ENCODE measurements at regions of chr1 and their contacts with region 1.

Region 1: GRCh38 chr1:185439727-185440415 is 122.8 kb upstream of the IVNS1ABP start:
- DNase-seq: peak; percentile 44
- H3K4me3 Mint-ChIP-seq: no peak overlapping the region
- H3K27ac Mint-ChIP-seq: no peak overlapping the region
- H3K4me1 Mint-ChIP-seq: peaks cover 27% of the 10 kb centered on the region
- H3K27me3 Mint-ChIP-seq: no peaks in the 10 kb centered on the region

Region 2: DNA sequence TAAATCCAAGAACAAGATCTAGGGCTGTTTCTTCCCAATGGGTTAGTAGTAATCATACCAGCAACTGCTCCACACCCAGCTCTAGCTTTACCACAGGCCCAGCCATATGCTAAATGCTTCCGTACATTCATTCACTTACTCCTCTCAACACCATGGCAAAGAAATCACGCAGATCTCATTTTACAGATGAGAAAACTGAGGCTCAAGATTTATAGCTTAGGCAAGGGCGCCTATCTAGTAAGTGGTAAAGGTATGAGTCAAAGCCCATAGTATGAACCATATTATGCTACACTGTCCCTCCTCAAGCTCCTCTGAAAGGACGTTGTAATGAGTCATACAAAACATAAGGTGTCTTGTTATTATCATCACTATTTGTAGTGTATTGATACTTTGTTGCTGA is 547.8 kb before region 1 on chr1:
- intact Hi-C with region 1: loop called (anchors 1 kb)
- DNase-seq: no peak
- H3K4me3 Mint-ChIP-seq: no peak overlapping the region
- H3K27ac Mint-ChIP-seq: peak overlapping the region; percentile 61
- H3K4me1 Mint-ChIP-seq: peaks cover 39% of the 10 kb centered on the region
- H3K27me3 Mint-ChIP-seq: no peaks in the 10 kb centered on the region

Region 3: DNA sequence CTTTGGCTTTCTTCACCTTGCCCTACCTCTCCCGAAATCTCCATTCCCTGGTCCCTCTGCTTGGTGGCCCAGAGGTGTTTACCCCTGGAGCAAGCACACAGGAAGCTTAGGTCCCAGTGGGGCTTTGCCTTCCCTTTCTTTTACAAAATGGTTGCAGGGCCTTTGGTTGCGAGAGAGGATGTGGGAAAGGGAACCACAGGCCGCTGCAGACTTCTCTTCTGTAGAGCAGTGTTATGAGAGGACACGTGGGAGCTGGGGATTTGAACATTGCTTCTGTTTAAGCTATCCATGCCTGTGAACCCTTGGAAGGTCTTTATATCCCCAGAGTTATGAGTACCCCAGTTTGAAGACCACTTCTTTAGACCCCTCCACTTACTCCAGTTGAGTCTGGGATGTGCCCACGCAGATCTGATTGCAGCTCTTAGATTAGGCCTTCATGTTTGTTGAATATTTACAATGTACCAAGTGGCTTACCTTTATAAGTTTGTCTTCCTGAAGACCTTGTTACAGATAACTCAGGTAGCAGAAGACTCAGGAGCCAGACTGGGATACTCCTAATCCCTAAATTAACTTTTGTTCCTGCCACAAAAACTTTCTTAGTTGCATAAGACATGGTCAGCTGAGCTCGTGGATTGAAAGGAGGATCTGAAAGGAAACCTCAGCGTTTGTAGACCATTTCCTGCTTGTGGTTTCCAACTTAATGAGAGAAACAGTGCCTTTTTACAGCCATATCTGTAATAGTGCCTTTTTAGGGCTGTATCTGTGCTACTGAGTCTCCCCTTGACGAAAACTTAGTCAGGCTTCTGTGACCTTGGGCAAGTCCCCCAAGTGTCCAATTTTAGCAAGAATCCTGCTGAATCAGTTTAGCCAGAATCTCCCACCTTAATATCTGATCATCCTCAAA is 100.9 kb before region 1 on chr1:
- intact Hi-C with region 1: loop called (anchors 1 kb)
- DNase-seq: peak; percentile 63
- H3K4me3 Mint-ChIP-seq: peak overlapping the region; percentile 13
- H3K27ac Mint-ChIP-seq: peak overlapping the region; percentile 78
- H3K4me1 Mint-ChIP-seq: peaks cover 43% of the 10 kb centered on the region
- H3K27me3 Mint-ChIP-seq: no peaks in the 10 kb centered on the region

Region 4: GRCh38 chr1:185367218-185367617 is 72.7 kb before region 1 on chr1:
- intact Hi-C with region 1: no loop called
- DNase-seq: no peak
- H3K4me3 Mint-ChIP-seq: no peak overlapping the region
- H3K27ac Mint-ChIP-seq: no peak overlapping the region
- H3K4me1 Mint-ChIP-seq: peaks cover 42% of the 10 kb centered on the region
- H3K27me3 Mint-ChIP-seq: peaks cover 4% of the 10 kb centered on the region

Region 5: GRCh38 chr1:185453496-185454192 is 13.8 kb after region 1 on chr1:
- intact Hi-C with region 1: no loop called
- DNase-seq: no peak
- H3K4me3 Mint-ChIP-seq: no peak overlapping the region
- H3K27ac Mint-ChIP-seq: no peak overlapping the region
- H3K4me1 Mint-ChIP-seq: peaks cover 7% of the 10 kb centered on the region
- H3K27me3 Mint-ChIP-seq: peaks cover 3% of the 10 kb centered on the region

Region 6: DNA sequence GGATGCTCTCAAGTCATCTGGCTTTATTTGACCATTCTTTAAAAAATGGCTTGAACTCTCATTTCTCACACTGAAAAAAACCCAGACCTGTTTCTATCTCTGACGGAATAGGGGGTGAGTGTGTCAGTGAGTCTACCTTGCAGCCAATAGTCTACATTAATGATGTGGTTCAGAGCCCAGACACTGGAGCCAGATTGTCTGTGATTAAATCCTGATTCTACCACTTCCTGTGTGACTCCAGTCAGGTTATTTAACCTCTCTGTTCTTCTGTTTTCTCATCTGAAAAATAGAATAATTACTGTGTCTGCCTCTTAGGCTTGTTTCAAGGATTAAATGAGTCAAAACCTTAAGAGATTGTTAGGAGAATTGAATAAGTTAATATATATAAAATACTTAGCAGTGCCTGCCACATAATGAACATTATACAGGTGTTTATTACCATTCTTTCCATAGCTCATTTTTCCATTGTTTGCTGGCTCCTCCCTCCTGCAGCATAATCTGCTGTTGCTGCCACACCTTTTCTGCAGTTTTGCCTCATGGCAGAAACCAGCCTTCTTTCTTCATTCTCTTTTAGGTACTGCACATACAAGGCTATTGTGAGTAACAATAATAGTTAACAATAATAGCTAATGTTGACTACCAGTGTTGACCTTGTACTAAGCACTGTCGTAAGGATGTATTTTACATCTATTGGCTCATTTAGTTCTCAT is 34.7 kb after region 1 on chr1:
- intact Hi-C with region 1: loop called (anchors 1 kb)
- DNase-seq: no peak
- H3K4me3 Mint-ChIP-seq: no peak overlapping the region
- H3K27ac Mint-ChIP-seq: no peak overlapping the region
- H3K4me1 Mint-ChIP-seq: peaks cover 17% of the 10 kb centered on the region
- H3K27me3 Mint-ChIP-seq: peaks cover 2% of the 10 kb centered on the region

Region 7: GRCh38 chr1:185566995-185567394 is 127.1 kb after region 1 on chr1:
- intact Hi-C with region 1: loop called (anchors 1 kb)
- DNase-seq: peak; percentile 52
- H3K4me3 Mint-ChIP-seq: peak overlapping the region; percentile 44
- H3K27ac Mint-ChIP-seq: peak overlapping the region; percentile 82
- H3K4me1 Mint-ChIP-seq: peaks cover 58% of the 10 kb centered on the region
- H3K27me3 Mint-ChIP-seq: no peaks in the 10 kb centered on the region

Region 8: DNA sequence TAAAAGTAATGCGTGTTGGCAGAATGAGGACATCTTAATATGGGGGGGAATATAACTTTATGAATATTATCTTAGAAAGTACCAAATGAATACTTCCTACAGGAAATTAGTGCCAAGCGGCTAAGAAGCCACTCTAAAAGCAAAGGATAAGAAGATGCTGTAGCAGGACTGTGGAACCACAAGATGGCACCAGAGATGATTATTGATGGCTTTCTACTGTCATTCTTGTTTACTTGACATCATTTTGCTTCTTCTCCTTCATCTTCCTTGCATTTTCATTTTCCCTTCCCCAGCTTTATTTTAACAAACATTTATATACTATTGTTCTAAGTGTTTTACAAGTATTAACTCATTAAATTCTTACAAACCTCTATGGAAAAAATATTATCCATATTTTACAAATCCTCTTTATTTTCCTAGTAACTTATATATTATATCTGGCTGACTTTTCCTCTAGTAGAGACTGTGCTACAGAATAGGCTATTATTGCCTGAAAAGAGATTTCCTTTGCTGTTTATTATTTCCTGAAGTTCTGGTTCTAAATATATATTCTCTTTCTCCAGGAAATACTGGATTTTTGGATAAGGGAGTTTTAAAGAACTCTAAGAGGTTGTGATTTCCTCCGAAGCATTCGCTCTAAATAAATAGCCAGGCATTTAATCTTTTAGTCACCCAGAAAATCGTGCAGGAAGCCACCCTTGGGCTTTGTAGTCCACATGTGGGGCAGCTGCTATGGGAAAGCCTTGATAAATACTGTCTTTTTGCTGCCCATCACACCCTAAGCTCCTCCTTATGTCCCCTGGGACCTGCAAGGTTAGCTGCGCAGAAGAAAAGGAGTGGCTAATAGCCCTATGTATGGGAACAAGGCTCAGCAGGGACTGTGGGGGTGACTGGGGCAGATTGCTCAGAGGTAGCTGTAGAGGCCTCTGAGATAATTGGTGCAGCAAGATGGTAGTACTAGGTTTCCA is 865.4 kb after region 1 on chr1:
- intact Hi-C with region 1: loop called (anchors 10 kb)
- DNase-seq: no peak
- H3K4me3 Mint-ChIP-seq: peak overlapping the region; percentile 48
- H3K27ac Mint-ChIP-seq: peak overlapping the region; percentile 86
- H3K4me1 Mint-ChIP-seq: peaks cover 58% of the 10 kb centered on the region
- H3K27me3 Mint-ChIP-seq: no peaks in the 10 kb centered on the region

Measured in activated T-helper 1 cell treated with anti-CD3 and anti-CD28 coated beads, Interleukin-12 subunit alpha, Interleukin-12 subunit beta, Interleukin-2, Interleukin-4 antibody, amounts not matched to agents 30 ng/mL and 10 ng/mL and 1 ng/mL, durations not matched to agents 14 hours and 24 hours and 36 hours (primary cell).